GM23248 (cell line): ENCODE measurements at regions of chr11 and their contacts with region 1.

Region 1: GRCh38 chr11:60899046-60899936 is 7.1 kb downstream of the PRPF19 start:
- DNase-seq: peak; percentile 77
- H3K4me3 ChIP-seq: no peak overlapping the region
- H3K27ac ChIP-seq: no peak overlapping the region
- H3K4me1 ChIP-seq: no peaks in the 10 kb centered on the region
- H3K27me3 ChIP-seq: no peaks in the 10 kb centered on the region

Region 2: DNA sequence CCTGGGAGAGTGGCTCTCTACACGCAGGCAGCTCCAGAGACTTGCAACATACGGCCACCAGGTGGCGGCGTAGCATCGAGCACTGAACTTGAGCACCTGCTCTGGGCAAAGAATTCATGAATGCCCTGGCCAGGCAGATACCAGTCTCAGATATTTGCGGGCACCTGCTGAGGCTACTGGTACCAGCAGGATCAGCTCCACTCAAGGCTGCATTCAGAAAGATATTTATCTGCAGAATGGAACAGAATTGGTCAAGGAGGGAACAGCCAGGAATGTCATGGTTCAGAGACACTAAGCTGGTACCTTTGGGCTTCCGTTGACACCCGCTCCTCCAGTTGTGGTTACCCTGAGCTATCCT is 68.2 kb before region 1 on chr11:
- in situ Hi-C with region 1: loop called (anchors 10 kb)
- DNase-seq: peak; percentile 84
- H3K4me3 ChIP-seq: no peak overlapping the region
- H3K27ac ChIP-seq: no peak overlapping the region
- H3K4me1 ChIP-seq: 0 out of 2 replicates have a peak, but pooled peaks cover 4% of the 10 kb centered on the region
- H3K27me3 ChIP-seq: peaks cover 9% of the 10 kb centered on the region